Activated CD4-positive, alpha-beta T cell treated with anti-CD3 and anti-CD28 coated beads for 36 hours (primary cell): ENCODE measurements at regions of chr1 and their contacts with region 1.

Region 1: GRCh38 chr1:160451119-160451858 is 50.9 kb downstream of the VANGL2 start:
- DNase-seq: no peak
- ATAC-seq: peak; percentile 33
- H3K4me3 Mint-ChIP-seq: peak overlapping the region; percentile 48
- H3K27ac Mint-ChIP-seq: peak overlapping the region; percentile 95
- H3K4me1 Mint-ChIP-seq: peaks cover 82% of the 10 kb centered on the region
- H3K27me3 Mint-ChIP-seq: no peaks in the 10 kb centered on the region

Region 2: DNA sequence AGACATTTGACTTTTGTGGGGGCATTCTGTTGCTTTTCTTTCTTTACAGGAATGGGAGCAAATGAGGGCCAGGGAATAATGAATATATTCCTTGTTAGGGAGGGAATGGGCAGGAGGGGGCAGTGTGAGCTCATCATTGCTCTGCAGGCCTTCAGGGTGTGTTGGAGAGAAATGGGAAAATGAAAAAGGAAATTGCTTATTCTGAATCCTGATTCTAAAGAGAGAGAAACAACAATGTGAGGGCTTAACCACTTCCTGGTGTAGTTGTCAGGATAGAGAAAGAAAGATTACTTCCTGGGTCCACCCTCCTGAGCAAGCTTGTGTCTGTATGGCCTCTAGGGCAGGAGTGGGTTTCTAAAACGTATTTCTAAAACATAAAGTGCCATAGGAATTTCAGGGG is 22.6 kb before region 1 on chr1:
- CTCF ChIA-PET with region 1: interaction called, 5 read pairs
- POLR2A ChIA-PET with region 1: interaction called, 3 read pairs
- intact Hi-C with region 1: loop called (anchors 1 to 2 kb)
- DNase-seq: peak; percentile 60
- ATAC-seq: peak; percentile 51
- H3K4me3 Mint-ChIP-seq: peak overlapping the region; percentile 32
- H3K27ac Mint-ChIP-seq: peak overlapping the region; percentile 94
- H3K4me1 Mint-ChIP-seq: peaks cover 63% of the 10 kb centered on the region
- H3K27me3 Mint-ChIP-seq: no peaks in the 10 kb centered on the region

Region 3: GRCh38 chr1:160437432-160438316 is 13.6 kb before region 1 on chr1:
- CTCF ChIA-PET with region 1: interaction called, 4 read pairs
- POLR2A ChIA-PET with region 1: no interaction called
- intact Hi-C with region 1: loop called in 1 of 2 experiments (anchors 1 kb)
- DNase-seq: no peak
- ATAC-seq: peak; percentile 96
- H3K4me3 Mint-ChIP-seq: peak overlapping the region; percentile 63
- H3K27ac Mint-ChIP-seq: peak overlapping the region; percentile 96
- H3K4me1 Mint-ChIP-seq: peaks cover 40% of the 10 kb centered on the region
- H3K27me3 Mint-ChIP-seq: no peaks in the 10 kb centered on the region

Region 4: GRCh38 chr1:160474392-160475242 is 23.3 kb after region 1 on chr1:
- CTCF ChIA-PET with region 1: interaction called, 14 read pairs
- POLR2A ChIA-PET with region 1: interaction called, 3 read pairs
- intact Hi-C with region 1: loop called (anchors 1 to 2 kb)
- DNase-seq: no peak
- ATAC-seq: peak; percentile 93
- H3K4me3 Mint-ChIP-seq: no peak overlapping the region
- H3K27ac Mint-ChIP-seq: no peak overlapping the region
- H3K4me1 Mint-ChIP-seq: peaks cover 6% of the 10 kb centered on the region
- H3K27me3 Mint-ChIP-seq: no peaks in the 10 kb centered on the region

Region 5: GRCh38 chr1:160795951-160796383 is 344.7 kb after region 1 on chr1 and contains the start of gene LY9:
- CTCF ChIA-PET with region 1: no interaction called
- POLR2A ChIA-PET with region 1: no interaction called
- intact Hi-C with region 1: loop called in 1 of 2 experiments (anchors 5 kb)
- DNase-seq: peak; percentile 89
- ATAC-seq: peak; percentile 79
- H3K4me3 Mint-ChIP-seq: peak within 1 kb of the TSS; percentile 78
- H3K27ac Mint-ChIP-seq: peak within 1 kb of the TSS; percentile 95
- H3K4me1 Mint-ChIP-seq: peaks cover 61% of the 10 kb centered on the region
- H3K27me3 Mint-ChIP-seq: no peaks in the 10 kb centered on the region
- total RNA-seq, gene LY9: 10.0 to 11.0 TPM